ENCODE measurements at regions of chr21 and their contacts with region 1.

Region 1: DNA sequence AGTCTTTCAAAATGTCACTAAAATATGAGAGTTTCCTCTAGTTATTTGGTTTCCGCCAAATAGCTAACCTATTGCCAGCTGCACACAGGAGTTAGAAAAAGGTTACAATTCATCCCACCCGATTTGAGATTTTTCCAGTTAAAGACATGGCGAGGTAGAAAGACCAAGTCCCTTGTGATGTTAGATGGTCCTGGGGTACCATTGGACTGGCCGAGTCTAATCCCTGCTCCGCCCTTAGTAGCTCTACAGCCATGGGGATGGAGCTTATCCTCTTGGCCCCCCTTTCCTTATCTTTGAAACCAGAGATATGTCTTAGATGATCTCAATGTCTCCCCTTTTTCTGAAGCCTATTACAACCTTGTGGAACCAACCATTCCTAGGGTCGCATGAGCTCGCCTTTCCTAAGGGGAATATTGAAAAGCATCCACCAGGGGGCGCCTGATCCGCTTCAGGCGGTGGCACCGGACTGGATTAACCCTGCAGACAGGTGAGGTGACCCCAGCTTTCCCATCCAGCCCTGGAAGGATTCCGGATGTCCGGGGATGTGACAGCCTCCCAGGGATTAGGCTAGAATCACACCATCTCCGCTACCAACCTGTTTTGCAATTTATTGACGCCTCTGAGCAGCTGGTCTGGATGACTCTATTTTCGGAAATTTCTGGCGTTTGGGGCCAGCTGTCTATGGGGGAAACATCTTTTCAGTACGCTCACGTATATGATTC is 68.3 kb upstream of the SIM2 start:
- DNase-seq: peak; percentile 69
- CTCF ChIP-seq: peak; percentile 84

Region 2: DNA sequence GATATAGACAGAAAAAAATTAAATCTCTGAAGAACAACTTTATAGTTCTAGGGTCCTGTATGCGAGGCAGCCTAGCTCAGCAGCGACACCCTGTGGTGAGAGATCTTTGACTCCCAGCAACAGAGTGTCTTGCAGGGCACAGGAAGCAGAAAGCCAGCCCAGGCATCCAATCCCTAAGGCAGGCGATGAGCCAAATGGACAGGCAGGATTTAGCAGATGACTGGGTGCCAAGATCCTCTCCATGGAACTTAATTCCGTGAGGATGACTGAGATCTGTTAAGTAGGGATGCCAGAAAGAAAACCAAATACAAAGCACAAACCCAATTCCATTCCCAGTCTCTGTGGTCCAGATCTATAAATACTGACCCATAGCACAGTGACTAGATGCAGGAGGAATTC is 297.1 kb after region 1 on chr21:
- in situ Hi-C with region 1: loop called (anchors 25 kb)
- DNase-seq: peak; percentile 79
- CTCF ChIP-seq: peak; percentile 90

Measured in GM13977 (cell line).